ENCODE measurements at regions of chr10 and their contacts with region 1.

Region 1: GRCh38 chr10:103612462-103613365 is 119.2 kb downstream of the NEURL1 start:
- DNase-seq: peak in 1 of 7 donors; percentile 22
- H3K4me3 ChIP-seq: no peak overlapping the region
- H3K27ac ChIP-seq: peak overlapping the region in 1 of 5 donors; percentile 31
- H3K4me1 ChIP-seq: peaks cover 0 to 19% of the 10 kb centered on the region in 2 donors
- H3K27me3 ChIP-seq: no peaks in the 10 kb centered on the region
- CTCF ChIP-seq: peak in 1 of 6 experiments; percentile 11
- POLR2A ChIP-seq: no peak

Region 2: DNA sequence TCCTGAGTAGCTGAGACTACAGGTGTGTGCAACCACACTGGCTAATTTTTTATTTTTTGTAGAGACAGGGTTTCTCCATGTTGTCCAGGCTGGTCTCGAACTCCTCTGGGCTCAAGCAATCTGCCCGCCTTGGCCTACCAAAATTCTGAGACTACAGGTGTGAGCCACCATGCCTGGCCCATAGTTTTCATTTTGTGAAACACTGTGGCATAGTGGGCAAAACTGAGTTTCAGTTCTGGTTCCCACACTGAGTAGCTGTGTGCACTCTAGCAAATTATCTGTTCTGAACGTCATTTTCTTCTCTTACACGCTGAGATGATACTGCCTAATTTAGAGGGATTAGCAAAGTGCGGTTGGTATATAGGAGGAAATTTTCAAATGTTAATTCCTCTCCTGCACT is 229.9 kb before region 1 on chr10:
- intact Hi-C with region 1: no loop called
- DNase-seq: no peak
- H3K4me3 ChIP-seq: no peak overlapping the region
- H3K27ac ChIP-seq: no peak overlapping the region
- H3K4me1 ChIP-seq: no peaks in the 10 kb centered on the region
- H3K27me3 ChIP-seq: no peaks in the 10 kb centered on the region
- CTCF ChIP-seq: no peak
- POLR2A ChIP-seq: no peak

Region 3: DNA sequence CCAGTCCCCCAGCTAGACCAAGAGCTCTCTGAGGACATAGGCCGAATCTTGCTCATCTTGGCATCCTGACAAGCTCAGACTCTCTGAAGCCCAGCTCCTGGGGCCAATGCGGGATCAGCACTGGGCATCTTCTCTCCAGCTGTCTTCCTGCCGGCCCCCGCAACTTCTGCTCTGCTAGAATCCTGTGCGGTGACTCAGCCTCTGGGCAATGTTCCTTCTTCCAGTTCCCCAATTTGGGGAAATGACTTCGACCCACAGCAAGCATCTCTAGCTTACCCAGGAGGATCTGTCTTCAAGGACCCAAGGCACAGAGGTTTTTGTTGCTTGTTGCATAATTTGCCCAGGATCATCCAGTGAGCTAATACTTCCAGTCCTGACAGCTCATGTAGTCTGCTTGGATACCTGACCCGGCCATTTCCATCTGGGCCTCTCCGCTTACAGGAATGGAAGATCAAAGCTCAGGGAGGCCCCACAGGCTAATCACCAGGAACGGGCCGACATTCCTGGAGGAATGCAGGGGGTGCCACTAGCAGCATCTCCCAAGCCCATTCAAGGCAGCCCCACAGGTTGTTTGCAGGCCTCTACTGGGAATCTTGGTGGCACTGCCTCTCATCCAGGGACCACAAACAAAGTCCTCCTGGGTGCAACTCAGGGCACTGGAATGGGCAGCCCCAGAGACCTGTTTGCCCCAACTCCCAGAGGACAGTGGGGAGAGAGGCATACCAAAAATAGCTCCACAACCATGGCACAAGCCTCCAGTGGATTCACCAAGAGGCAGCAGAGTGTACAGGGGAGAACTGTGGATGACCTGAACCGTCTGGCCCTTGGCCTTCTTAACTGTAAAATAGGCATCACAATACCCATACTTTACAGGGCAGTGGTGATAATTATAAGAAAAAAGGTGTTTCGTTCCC is 32.7 kb after region 1 on chr10:
- intact Hi-C with region 1: loop called in 1 of 2 experiments (anchors 5 kb)
- DNase-seq: peak in 6 of 7 donors; percentile 79 to 91 (median 84)
- H3K4me3 ChIP-seq: no peak overlapping the region
- H3K27ac ChIP-seq: peak overlapping the region in 4 of 5 donors; percentile 39 to 87 (median 66)
- H3K4me1 ChIP-seq: peaks cover 27 to 57% of the 10 kb centered on the region in 2 donors
- H3K27me3 ChIP-seq: no peaks in the 10 kb centered on the region
- CTCF ChIP-seq: no peak
- POLR2A ChIP-seq: no peak

Region 4: DNA sequence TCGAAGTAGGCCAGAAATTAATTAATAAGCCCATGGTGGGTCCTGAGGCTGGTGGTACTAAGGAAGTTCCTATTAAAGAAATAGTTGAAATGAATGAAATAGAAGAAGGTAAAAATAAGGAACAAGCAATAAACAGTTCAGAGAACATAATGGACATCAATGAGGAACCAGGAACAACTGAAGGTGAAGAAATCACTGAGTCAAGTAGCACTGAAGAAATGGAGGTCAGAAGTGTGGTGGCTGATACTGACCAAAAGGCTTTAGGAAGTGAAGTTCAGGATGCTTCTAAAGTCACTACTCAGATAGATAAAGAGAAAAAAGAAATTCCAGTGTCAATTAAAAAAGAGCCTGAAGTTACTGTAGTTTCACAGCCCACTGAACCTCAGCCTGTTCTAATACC is 390.2 kb after region 1 on chr10:
- intact Hi-C with region 1: no loop called
- DNase-seq: no peak
- H3K4me3 ChIP-seq: no peak overlapping the region
- H3K27ac ChIP-seq: no peak overlapping the region
- H3K4me1 ChIP-seq: no peaks in the 10 kb centered on the region
- H3K27me3 ChIP-seq: no peaks in the 10 kb centered on the region
- CTCF ChIP-seq: no peak
- POLR2A ChIP-seq: no peak

Measured in adrenal gland (tissue), 19 donors.